ENCODE measurements at regions of chr17 and their contacts with region 1.

Region 1: GRCh38 chr17:78965491-78965948 is 14.2 kb downstream of the LGALS3BP start:
- DNase-seq: no peak
- ATAC-seq: no peak
- H3K4me3 ChIP-seq: no peak overlapping the region
- H3K27ac ChIP-seq: no peak overlapping the region
- H3K4me1 ChIP-seq: peaks cover 0 to 13% (median 4%) of the 10 kb centered on the region in 9 donors
- H3K27me3 ChIP-seq: no peaks in the 10 kb centered on the region
- CTCF ChIP-seq: no peak

Region 2: DNA sequence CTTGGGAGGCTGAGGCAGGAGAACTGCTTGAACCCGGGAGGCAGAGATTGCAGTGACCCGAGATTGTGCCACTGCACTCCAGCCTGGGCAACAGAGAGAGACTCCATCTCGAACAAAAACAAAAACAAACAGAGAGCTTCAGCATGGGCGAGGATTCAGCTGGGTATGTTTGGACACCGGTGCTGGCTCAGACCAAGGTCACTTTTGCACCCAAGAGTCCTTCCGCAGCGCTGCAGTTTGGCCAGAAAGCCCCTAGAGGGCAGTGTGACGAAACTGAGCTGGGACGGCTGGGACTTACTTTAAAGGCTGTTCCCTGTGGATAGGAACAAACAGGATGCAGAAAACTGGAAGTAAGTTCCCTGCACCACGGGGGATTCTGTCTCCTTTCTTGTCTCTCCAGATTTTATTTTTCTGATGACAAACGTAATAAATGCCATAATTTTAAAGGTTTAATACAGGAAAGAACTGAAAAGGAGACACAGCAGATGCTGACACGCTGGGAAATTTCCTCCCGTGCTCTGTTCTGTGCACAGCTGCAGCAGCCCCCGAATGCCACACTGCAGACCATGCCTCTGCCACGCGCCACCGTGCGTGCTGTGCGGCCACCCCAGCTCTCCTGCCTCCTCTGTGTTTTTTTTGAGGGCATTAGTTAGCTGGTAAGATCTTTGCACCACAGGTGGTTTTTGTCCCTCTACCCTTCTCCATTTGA is 99.7 kb before region 1 on chr17:
- intact Hi-C with region 1: loop called in 6 of 10 experiments (anchors 2 to 5 kb)
- DNase-seq: peak; percentile 84 to 87
- ATAC-seq: peak; percentile 68 to 88 (median 83)
- H3K4me3 ChIP-seq: peak overlapping the region in 4 of 10 donors; percentile 13 to 42 (median 26)
- H3K27ac ChIP-seq: peak overlapping the region in 7 of 10 donors; percentile 13 to 60 (median 48)
- H3K4me1 ChIP-seq: peaks cover 3 to 39% (median 12%) of the 10 kb centered on the region in 9 donors
- H3K27me3 ChIP-seq: no peaks in the 10 kb centered on the region
- CTCF ChIP-seq: peak; percentile 85 to 97 (median 93)

Measured in heart right ventricle (tissue), 16 donors.